ENCODE measurements at regions of chr3 and their contacts with region 1.

Region 1: GRCh38 chr3:59049671-59050331 is at the start of gene CFAP20DC:
- DNase-seq: peak; percentile 78 to 90 (median 86)
- ATAC-seq: peak; percentile 96
- H3K4me3 ChIP-seq: peak within 1 kb of the TSS; percentile 69
- H3K4me3 Mint-ChIP-seq: peak within 1 kb of the TSS; percentile 75 to 89 (median 80)
- H3K27ac ChIP-seq: peak within 1 kb of the TSS; percentile 59
- H3K27ac Mint-ChIP-seq: peak within 1 kb of the TSS; percentile 40 to 90 (median 80)
- H3K4me1 ChIP-seq: no peaks in the 10 kb centered on the region
- H3K4me1 Mint-ChIP-seq: peaks cover 0 to 16% (median 10%) of the 10 kb centered on the region in 7 donors
- H3K27me3 ChIP-seq: no peaks in the 10 kb centered on the region
- H3K27me3 Mint-ChIP-seq: peaks cover 0 to 6% (median 0%) of the 10 kb centered on the region in 5 donors
- total RNA-seq, gene CFAP20DC: 0.24 to 1.2 (median 0.43) TPM in 3 of 5 experiments, not detected in the others

Region 2: DNA sequence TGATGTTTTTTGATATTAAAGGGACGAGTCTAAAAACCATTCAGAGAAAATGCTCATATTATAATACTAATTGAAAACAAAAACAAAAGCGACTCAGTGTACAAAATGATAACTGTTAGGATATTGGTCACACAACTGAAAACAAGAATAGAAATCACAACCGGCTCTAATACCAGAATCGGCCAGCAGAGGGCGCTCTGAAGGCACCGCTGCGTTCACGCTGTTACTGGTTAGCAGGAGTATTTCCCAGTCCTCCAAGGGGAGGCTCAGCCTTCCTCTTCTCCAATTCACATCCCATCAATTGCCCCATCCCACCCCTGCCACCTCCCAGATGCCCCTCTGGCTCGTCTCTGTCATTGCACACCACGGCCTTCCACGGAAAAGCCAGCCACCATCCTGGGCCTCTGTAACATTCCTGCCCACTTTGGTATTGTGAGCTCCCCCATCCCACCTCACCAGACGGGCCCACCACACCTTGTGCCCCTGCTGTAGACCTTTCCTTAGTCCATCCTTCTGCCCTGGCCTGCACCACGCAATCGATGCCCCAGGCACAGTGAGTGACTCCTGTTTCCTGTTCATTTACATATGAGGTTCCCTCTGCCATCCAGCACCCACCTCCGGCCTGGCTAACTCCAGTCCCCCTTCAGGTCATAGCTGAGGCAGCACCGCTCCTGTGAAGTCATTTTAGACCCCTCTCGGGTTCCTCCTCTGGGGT is 481.1 kb before region 1 on chr3:
- CTCF ChIA-PET with region 1: interaction called, 3 read pairs
- POLR2A ChIA-PET with region 1: no interaction called
- intact Hi-C with region 1: loop called in 1 of 2 experiments (anchors 10 kb)
- DNase-seq: peak; percentile 5 to 75 (median 48)
- ATAC-seq: peak; percentile 68
- H3K4me3 ChIP-seq: no peak overlapping the region
- H3K4me3 Mint-ChIP-seq: peak overlapping the region in 7 of 10 donors; percentile 17 to 54 (median 36)
- H3K27ac ChIP-seq: no peak overlapping the region
- H3K27ac Mint-ChIP-seq: peak overlapping the region in 4 of 9 donors; percentile 3 to 62 (median 42)
- H3K4me1 ChIP-seq: no peaks in the 10 kb centered on the region
- H3K4me1 Mint-ChIP-seq: peaks cover 4 to 7% (median 6%) of the 10 kb centered on the region in 7 donors
- H3K27me3 ChIP-seq: no peaks in the 10 kb centered on the region
- H3K27me3 Mint-ChIP-seq: peaks cover 0 to 8% (median 4%) of the 10 kb centered on the region in 5 donors

Region 3: DNA sequence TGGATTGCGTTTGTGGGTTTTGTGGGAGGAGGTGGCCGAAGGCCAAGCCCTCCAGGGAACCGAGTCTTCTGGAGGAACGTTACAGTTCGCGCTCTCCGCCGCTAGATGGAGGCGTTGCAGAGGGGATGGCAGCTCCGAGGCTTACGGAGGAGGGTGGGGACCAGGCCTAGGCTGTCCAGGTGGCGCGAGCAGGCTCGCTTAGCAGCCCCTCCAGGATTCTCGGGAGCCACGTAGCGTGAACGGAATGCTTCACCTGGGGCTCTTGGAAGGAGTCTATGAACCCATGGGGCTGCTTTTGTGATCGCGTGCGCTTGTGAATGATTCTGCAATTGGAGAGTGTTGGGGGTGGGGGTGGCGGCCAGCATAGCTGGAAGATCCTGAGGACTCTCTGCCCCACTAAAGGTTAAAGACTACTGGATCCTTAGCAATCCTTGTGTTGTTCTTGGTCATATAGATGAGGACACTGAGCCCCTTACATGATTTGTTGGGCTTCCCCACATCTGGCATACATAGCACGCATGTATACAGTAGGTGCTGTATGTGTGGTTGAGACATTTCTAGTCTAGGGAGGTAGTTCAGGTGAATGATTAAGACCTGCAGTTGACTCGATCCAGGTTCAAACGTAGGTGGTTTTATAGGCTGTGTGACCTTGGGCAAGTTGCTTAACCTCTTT is 409.0 kb before region 1 on chr3:
- CTCF ChIA-PET with region 1: no interaction called
- POLR2A ChIA-PET with region 1: no interaction called
- intact Hi-C with region 1: loop called in 1 of 2 experiments (anchors 1 kb)
- DNase-seq: peak in 7 of 9 donors; percentile 14 to 60 (median 25)
- ATAC-seq: peak; percentile 73
- H3K4me3 ChIP-seq: no peak overlapping the region
- H3K4me3 Mint-ChIP-seq: no peak overlapping the region
- H3K27ac ChIP-seq: no peak overlapping the region
- H3K27ac Mint-ChIP-seq: no peak overlapping the region
- H3K4me1 ChIP-seq: no peaks in the 10 kb centered on the region
- H3K4me1 Mint-ChIP-seq: peaks cover 0 to 3% (median 0%) of the 10 kb centered on the region in 7 donors
- H3K27me3 ChIP-seq: no peaks in the 10 kb centered on the region
- H3K27me3 Mint-ChIP-seq: peaks cover 0 to 7% (median 0%) of the 10 kb centered on the region in 5 donors

Region 4: DNA sequence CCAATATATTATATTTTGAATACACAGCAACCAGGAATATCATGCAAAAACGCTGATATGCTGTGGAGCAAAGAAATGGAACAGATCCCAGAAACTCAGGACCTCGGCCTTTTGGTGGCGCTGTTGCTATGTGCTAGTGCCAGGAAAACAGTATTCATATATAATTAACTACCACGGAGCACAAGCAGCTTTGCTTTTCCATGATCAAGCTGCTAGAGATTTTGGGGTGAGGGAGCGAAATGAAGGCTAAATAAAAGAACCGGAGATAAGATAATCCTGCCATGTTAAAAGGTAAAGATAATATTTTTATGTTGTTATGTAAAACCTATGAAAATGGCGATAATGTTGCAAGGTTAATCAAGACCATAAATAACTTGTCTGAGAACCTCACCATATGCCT is 225.5 kb before region 1 on chr3:
- CTCF ChIA-PET with region 1: no interaction called
- POLR2A ChIA-PET with region 1: no interaction called
- intact Hi-C with region 1: loop called in 1 of 2 experiments (anchors 2 kb)
- DNase-seq: no peak
- ATAC-seq: no peak
- H3K4me3 ChIP-seq: no peak overlapping the region
- H3K4me3 Mint-ChIP-seq: no peak overlapping the region
- H3K27ac ChIP-seq: no peak overlapping the region
- H3K27ac Mint-ChIP-seq: no peak overlapping the region
- H3K4me1 ChIP-seq: no peaks in the 10 kb centered on the region
- H3K4me1 Mint-ChIP-seq: no peaks in the 10 kb centered on the region
- H3K27me3 ChIP-seq: no peaks in the 10 kb centered on the region
- H3K27me3 Mint-ChIP-seq: peaks cover 0 to 10% (median 8%) of the 10 kb centered on the region in 5 donors

Region 5: GRCh38 chr3:58994746-58995330 is 55.0 kb before region 1 on chr3:
- CTCF ChIA-PET with region 1: interaction called, 5 read pairs
- POLR2A ChIA-PET with region 1: no interaction called
- intact Hi-C with region 1: loop called (anchors 1 kb)
- DNase-seq: peak in 7 of 9 donors; percentile 20 to 58 (median 47)
- ATAC-seq: peak; percentile 65
- H3K4me3 ChIP-seq: no peak overlapping the region
- H3K4me3 Mint-ChIP-seq: no peak overlapping the region
- H3K27ac ChIP-seq: no peak overlapping the region
- H3K27ac Mint-ChIP-seq: no peak overlapping the region
- H3K4me1 ChIP-seq: no peaks in the 10 kb centered on the region
- H3K4me1 Mint-ChIP-seq: peaks cover 0 to 4% (median 0%) of the 10 kb centered on the region in 7 donors
- H3K27me3 ChIP-seq: peaks cover 0 to 3% of the 10 kb centered on the region in 2 donors
- H3K27me3 Mint-ChIP-seq: peaks cover 4 to 16% (median 7%) of the 10 kb centered on the region in 5 donors

Measured in naive thymus-derived CD4-positive, alpha-beta T cell (primary cell).